IMR-90 (cell line): ENCODE measurements at regions of chr3 and their contacts with region 1.

Region 1: DNA sequence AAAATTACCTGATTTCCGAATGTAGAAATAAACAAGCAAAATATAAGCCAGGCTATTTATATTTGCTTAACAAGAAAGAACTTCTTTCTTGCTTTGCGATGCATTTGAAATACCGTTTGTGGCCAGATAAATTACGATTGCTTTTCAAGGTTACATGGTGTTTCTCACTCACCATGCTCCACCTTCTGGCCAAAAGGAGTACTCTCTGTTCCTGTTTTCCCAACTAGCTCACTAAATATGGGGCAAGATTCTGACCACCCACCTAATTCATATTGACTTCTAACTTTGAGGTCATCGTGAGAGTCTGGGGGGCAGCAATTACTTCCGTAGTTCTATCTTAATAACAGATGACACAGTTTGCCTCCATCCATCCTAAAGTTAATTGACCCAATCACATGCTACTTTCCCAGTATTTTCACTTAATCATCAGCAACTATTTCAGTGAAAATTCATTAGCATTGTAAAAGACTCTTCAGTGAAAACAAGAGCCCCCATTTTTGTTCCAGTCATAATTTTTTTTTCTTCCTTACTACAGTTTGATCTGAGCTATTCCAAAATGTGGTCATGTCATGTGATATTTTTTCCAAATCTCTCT is 25.9 kb downstream of the ACP3 start:
- DNase-seq: peak; percentile 66
- ATAC-seq: peak; percentile 72; the same call in 1 of the 2 replicates
- H3K4me3 ChIP-seq: no peak overlapping the region
- H3K27ac ChIP-seq: no peak overlapping the region
- H3K4me1 ChIP-seq: no peaks in the 10 kb centered on the region
- H3K27me3 ChIP-seq: no peaks in the 10 kb centered on the region; the same call in none of the 2 replicates
- CTCF ChIP-seq: peak; percentile 86
- POLR2A ChIP-seq: no peak
- RAD21 ChIP-seq: peak; percentile 69

Region 2: DNA sequence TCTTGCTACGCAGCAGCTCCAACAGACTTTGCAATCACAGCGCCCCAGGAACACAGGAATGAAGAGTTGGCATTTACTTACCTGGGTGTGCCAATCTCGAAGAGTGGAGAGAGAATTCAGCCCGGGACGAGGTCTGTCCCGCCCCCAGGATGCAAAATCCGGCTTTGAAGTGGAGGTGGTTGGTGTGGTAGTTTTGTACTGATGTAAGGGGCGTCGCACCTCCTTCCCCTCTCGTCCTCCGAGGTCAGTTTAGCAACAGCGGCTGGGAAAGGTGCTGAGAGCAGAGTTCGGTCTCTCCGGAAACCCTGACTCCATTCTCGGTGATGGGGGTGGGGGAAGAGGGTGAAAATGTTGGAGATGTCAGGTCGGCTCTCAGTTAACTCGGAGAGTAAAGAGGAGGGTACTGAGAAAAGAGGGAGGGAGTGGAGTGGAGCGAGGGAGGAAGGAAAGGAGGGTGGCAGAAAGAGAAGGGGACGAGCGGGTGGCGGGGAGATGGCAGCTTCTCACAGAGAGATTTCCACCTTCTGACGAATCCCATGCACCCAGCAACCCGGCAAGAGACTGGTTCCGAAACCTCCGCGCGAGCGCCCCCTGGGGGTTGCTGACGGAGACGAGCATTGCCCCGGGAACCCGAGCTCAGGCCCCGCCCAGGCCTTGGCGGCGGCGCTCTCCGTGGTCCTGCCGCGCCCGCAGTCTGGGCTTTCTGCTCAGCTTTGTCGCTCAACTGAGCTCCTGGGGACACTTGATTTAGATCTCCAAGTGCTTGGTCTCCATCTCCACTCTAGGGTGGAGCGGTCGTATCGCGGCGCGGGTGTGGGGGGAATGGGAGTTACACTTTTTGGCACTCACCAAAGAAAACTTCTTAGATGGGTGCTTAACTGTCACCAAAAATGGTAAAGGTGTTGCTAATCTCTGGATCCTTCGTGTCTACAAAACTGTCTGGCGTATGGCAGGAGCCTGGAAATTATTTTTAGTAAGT is 308.3 kb before region 1 on chr3 and contains the start of gene CPNE4:
- CTCF ChIA-PET with region 1: no interaction called
- POLR2A ChIA-PET with region 1: no interaction called
- dilution Hi-C with region 1: no loop called
- in situ Hi-C with region 1: no loop called
- intact Hi-C with region 1: loop called (anchors 1 kb)
- DNase-seq: peak; percentile 51
- ATAC-seq: peak; percentile 99
- H3K4me3 ChIP-seq: no peak within 1 kb of the TSS
- H3K27ac ChIP-seq: no peak within 1 kb of the TSS
- H3K4me1 ChIP-seq: no peaks in the 10 kb centered on the region
- H3K27me3 ChIP-seq: peaks cover 19% of the 10 kb centered on the region
- CTCF ChIP-seq: peak; percentile 84
- POLR2A ChIP-seq: no peak
- RAD21 ChIP-seq: peak; percentile 36; the same call in 1 of the 2 replicates
- total RNA-seq, gene CPNE4: not detected in 2 replicates

Region 3: DNA sequence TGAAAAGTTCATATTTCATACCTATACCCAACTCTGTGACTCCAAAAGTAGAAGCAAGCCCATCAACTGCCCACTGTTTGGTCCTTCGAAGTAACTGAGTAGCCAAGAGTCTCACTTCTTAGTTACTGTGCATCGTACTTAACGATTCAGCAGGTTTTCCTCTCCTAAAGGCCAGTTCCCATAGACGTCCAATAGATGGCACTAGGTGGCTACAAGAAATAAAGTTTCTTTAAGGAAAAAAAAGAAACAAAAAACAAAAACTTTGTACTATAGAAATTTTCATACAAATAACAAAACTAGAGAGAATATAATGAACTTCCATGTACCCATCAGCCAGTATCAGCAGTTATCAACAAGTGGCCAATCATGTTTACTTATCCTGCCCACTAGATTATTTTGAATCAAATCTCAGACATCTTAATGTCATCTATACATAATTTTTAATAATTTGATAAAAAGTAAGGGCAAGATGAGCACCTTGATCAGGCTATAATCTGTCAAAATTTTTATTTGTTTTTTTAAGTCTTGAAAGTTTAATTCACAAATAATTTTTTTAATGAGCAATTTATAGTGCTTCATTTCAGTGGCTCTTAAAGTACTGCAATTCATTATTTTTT is 89.7 kb before region 1 on chr3:
- CTCF ChIA-PET with region 1: interaction called, 26 read pairs
- POLR2A ChIA-PET with region 1: no interaction called
- dilution Hi-C with region 1: no loop called
- in situ Hi-C with region 1: loop called (anchors 5 kb)
- intact Hi-C with region 1: loop called (anchors 1 kb)
- DNase-seq: peak; percentile 76
- ATAC-seq: peak; percentile 55
- H3K4me3 ChIP-seq: no peak overlapping the region
- H3K27ac ChIP-seq: no peak overlapping the region
- H3K4me1 ChIP-seq: peaks cover 8% of the 10 kb centered on the region
- H3K27me3 ChIP-seq: no peaks in the 10 kb centered on the region; the same call in 1 of the 2 replicates
- CTCF ChIP-seq: peak; percentile 89
- POLR2A ChIP-seq: no peak
- RAD21 ChIP-seq: peak; percentile 68

Region 4: GRCh38 chr3:132317229-132317948 is 25.7 kb before region 1 on chr3 and contains the start of gene ACP3:
- CTCF ChIA-PET with region 1: interaction called, 10 read pairs
- POLR2A ChIA-PET with region 1: no interaction called
- dilution Hi-C with region 1: no loop called
- in situ Hi-C with region 1: no loop called
- intact Hi-C with region 1: no loop called
- DNase-seq: peak; percentile 82
- ATAC-seq: peak; percentile 76
- H3K4me3 ChIP-seq: peak within 1 kb of the TSS; percentile 5; the same call in 1 of the 2 replicates
- H3K27ac ChIP-seq: peak within 1 kb of the TSS; percentile 82
- H3K4me1 ChIP-seq: no peaks in the 10 kb centered on the region
- H3K27me3 ChIP-seq: no peaks in the 10 kb centered on the region
- CTCF ChIP-seq: no peak
- POLR2A ChIP-seq: no peak
- RAD21 ChIP-seq: no peak
- total RNA-seq, gene ACP3: 0.28 and 0.54 TPM in 2 replicates

Region 5: DNA sequence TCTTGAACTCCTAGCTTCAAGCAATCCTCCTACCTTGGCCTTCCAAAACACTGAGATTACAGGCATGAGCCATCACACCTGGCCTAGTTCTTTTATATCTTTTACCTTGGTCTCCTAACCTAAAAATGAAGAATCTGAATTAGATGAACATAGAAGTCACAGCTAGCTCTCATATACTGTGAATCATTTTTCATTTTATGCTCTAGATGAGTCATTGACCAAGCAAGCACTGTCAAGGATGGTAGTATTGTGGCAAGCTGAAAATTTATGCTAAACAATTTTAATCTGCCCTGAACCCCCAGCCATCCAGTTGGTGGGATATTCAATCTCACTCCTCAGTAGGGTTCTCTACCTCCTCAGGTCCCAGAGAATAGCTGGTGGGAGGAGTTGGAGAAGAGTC is 25.8 kb after region 1 on chr3:
- CTCF ChIA-PET with region 1: interaction called, 3 read pairs
- POLR2A ChIA-PET with region 1: interaction called, 20 read pairs
- dilution Hi-C with region 1: no loop called
- in situ Hi-C with region 1: no loop called
- intact Hi-C with region 1: no loop called
- DNase-seq: no peak
- ATAC-seq: no peak; the same call in 1 of the 2 replicates
- H3K4me3 ChIP-seq: no peak overlapping the region
- H3K27ac ChIP-seq: no peak overlapping the region
- H3K4me1 ChIP-seq: no peaks in the 10 kb centered on the region
- H3K27me3 ChIP-seq: peaks cover 3% of the 10 kb centered on the region; the same call in 1 of the 2 replicates
- CTCF ChIP-seq: no peak
- POLR2A ChIP-seq: no peak
- RAD21 ChIP-seq: no peak

Region 6: DNA sequence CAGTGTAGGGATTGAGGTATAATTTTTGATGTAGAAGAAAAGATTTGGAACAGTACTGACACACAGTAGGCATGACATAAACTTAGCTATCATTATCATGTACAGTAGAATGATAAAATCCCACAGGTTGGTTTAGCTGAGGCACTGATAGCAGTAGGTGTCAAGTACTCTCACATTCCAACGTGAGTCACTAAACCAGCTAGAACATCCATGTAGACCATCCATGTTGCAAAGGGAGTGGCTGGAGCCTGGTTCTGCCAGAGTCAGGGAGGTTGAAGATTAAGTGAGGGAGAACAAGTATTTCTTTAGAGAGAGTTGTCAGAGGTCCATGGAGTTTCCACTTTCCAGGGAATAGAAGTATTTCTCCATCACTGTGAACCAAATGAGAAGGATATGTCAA is 537.9 kb after region 1 on chr3:
- CTCF ChIA-PET with region 1: no interaction called
- POLR2A ChIA-PET with region 1: no interaction called
- dilution Hi-C with region 1: no loop called
- in situ Hi-C with region 1: no loop called
- intact Hi-C with region 1: no loop called
- DNase-seq: no peak
- ATAC-seq: no peak
- H3K4me3 ChIP-seq: no peak overlapping the region
- H3K27ac ChIP-seq: no peak overlapping the region
- H3K4me1 ChIP-seq: no peaks in the 10 kb centered on the region
- H3K27me3 ChIP-seq: no peaks in the 10 kb centered on the region
- CTCF ChIP-seq: no peak
- POLR2A ChIP-seq: no peak
- RAD21 ChIP-seq: no peak

Region 7: DNA sequence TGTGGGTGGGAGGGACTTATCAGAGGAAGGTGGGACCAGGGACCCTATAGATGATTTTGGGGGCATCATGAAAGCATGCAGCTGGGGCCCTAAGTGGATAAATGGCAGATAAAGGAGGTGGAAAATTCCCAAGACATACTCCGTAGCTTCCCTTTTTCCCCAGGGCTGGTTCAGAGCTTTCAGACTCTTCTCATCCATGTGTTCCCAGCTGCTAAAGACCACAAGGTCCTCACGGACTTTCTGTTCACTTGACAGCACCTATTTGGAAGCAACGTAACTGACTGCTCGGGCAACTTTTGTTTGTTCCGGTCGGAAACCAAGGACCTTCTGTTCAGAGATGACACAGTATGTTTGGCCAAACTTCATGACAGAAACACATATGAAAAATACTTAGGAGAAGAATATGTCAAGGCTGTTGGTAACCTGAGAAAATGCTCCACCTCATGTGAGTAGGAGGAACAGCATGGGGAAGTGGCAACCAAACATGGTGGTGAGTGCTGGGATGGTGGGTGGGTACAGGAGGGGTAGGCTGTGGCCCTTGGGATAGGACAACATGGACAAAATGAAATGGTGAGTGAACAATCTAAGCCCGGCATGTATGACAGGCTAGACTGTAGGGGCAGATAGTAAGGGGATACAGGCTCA is 1433.8 kb after region 1 on chr3:
- CTCF ChIA-PET with region 1: no interaction called
- POLR2A ChIA-PET with region 1: no interaction called
- dilution Hi-C with region 1: no loop called
- in situ Hi-C with region 1: no loop called
- intact Hi-C with region 1: no loop called
- DNase-seq: no peak
- ATAC-seq: no peak
- H3K4me3 ChIP-seq: no peak overlapping the region
- H3K27ac ChIP-seq: no peak overlapping the region
- H3K4me1 ChIP-seq: no peaks in the 10 kb centered on the region
- H3K27me3 ChIP-seq: peaks cover 8% of the 10 kb centered on the region
- CTCF ChIP-seq: no peak
- POLR2A ChIP-seq: no peak
- RAD21 ChIP-seq: no peak